Aorta (tissue), 5 donors: ENCODE measurements at regions of chr9 and their contacts with region 1.

Region 1: GRCh38 chr9:31347082-31347617 is 1037.3 kb upstream of the ACO1 start:
- DNase-seq: no peak
- ATAC-seq: no peak
- H3K4me3 ChIP-seq: no peak overlapping the region
- H3K27ac ChIP-seq: no peak overlapping the region
- H3K4me1 ChIP-seq: no peaks in the 10 kb centered on the region
- H3K27me3 ChIP-seq: no peaks in the 10 kb centered on the region

Region 2: DNA sequence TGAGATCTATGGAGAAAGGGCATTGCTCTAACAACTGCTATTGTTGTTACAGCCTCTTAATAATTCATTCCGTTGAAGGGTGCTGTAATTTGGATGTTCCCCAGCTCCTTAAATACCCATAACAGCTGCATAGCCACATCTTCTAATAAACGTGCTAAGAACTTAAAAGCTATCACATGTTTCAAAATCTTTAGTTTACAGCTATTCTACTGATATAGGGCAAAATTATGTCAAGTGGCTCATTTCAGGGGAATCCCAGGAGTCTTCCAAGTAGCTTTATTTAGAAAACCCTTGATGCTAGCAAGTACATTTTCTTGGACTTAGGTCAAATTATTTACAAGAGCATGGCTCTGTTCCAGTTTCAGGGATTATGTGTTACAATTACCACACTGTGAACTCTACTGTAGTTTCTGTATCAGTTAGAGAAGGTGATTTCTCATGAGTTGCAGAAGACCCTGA is 46.9 kb after region 1 on chr9:
- intact Hi-C with region 1: loop called in 1 of 2 experiments (anchors 5 kb)
- DNase-seq: no peak
- ATAC-seq: no peak
- H3K4me3 ChIP-seq: no peak overlapping the region
- H3K27ac ChIP-seq: no peak overlapping the region
- H3K4me1 ChIP-seq: no peaks in the 10 kb centered on the region
- H3K27me3 ChIP-seq: no peaks in the 10 kb centered on the region